Heart right ventricle (tissue), 16 donors: ENCODE measurements at regions of chr4 and their contacts with region 1.

Region 1: DNA sequence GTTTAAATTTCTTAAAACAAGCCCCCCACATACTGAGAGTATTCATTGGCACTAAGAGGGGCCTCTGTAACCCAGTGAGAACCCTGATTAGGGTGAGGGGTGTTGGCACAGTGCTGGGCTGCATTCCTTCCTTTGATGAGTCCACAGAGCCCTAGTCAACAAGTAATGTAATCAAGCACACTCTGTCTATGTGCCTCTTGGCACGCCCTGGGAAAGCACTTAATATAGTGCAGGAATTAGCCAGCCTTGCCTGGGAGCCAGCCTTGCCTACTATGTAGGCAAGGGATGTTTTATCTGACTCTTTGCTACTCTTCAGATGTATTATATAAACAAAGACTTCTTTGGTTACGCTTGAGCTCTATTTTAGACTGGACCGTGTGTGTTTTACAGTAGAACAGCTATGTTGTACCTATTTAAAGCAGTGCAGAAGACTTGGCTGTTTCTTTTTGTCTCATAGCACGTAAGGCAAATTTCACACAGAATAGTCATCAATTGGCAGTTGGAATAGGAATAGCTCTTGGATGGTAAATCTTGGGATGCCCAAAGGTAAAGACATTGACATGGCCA is 64.3 kb downstream of the FRAS1 start:
- DNase-seq: peak; percentile 39 to 48
- ATAC-seq: peak; percentile 82 to 100 (median 99)
- H3K4me3 ChIP-seq: no peak overlapping the region
- H3K27ac ChIP-seq: peak overlapping the region in 4 of 10 donors; percentile 25 to 41 (median 34)
- H3K4me1 ChIP-seq: peaks cover 0 to 12% (median 6%) of the 10 kb centered on the region in 9 donors
- H3K27me3 ChIP-seq: no peaks in the 10 kb centered on the region
- CTCF ChIP-seq: no peak

Region 2: DNA sequence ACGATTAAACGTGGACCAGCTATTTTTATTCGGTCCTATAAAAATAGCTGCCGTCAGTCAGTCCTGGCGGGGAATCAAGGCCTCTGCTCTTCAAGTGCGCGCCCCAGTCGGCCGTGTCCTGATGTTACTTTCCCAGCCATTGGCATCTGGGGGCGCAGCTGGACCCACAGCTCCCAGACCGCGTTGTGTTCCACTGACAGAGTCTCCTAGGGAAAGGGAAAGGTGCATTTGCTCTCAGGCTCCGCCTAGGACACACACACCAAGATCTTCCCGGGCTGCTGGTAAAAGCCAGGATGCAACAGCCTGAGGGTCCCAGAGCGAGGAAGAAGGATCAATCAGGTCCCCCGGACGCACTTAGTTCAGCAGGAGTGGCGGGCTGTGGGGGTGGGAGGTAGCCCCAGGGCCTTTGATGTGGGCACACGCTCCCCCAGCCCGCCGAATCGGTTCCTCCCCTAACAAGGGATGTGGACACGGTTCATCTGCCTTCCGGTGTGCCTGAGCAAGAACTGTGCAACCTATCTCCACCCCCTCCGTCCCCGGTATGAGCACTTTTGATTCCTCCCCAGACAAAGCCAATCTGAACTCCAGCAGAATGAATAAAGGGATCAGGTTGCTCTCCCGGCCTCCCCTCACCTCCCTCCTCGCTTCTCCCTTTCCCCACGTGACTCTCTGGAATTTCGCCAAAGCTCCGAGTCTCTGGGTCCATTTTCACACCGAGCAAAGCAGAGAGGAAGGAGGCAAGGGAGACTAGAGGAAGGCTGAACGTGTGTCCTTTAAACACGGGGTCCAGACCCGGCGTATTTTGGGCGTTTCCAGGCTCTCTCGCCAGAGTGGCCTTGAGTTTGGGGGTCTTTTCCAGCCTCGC is 64.9 kb before region 1 on chr4:
- intact Hi-C with region 1: loop called in 1 of 10 experiments (anchors 5 kb)
- DNase-seq: peak; percentile 53 to 84
- ATAC-seq: peak; percentile 63 to 86 (median 81)
- H3K4me3 ChIP-seq: peak overlapping the region; percentile 54 to 77 (median 70)
- H3K27ac ChIP-seq: peak overlapping the region; percentile 35 to 93 (median 82)
- H3K4me1 ChIP-seq: peaks cover 0 to 37% (median 16%) of the 10 kb centered on the region in 9 donors
- H3K27me3 ChIP-seq: peaks cover 0 to 64% (median 0%) of the 10 kb centered on the region in 7 donors
- CTCF ChIP-seq: peak in 3 of 9 donors; percentile 19 to 22 (median 22)

Region 3: DNA sequence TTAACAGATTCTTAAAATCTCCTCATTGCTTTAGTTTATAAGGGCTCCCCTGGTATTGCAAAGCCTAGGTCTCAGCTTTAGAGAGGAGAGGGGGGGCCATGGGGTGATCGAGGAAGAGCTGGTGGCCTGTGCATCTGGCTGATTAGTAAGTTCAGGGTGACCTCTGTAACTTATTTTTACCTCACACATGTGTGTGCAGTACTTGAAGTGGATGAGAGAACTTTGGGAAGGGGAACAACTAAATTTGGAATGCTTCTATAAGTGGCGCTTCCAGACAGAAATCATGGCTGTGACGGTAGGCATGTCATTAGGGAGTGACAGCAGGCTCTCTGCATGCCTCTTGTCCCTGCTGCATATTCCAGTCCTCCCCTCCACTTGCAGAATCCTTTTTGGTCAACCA is 22.4 kb before region 1 on chr4:
- intact Hi-C with region 1: loop called in 1 of 10 experiments (anchors 1 kb)
- DNase-seq: peak in 1 of 2 donors; percentile 10
- ATAC-seq: peak; percentile 43 to 97 (median 92)
- H3K4me3 ChIP-seq: no peak overlapping the region
- H3K27ac ChIP-seq: peak overlapping the region in 6 of 10 donors; percentile 19 to 50 (median 46)
- H3K4me1 ChIP-seq: peaks cover 0 to 25% (median 12%) of the 10 kb centered on the region in 9 donors
- H3K27me3 ChIP-seq: no peaks in the 10 kb centered on the region
- CTCF ChIP-seq: no peak

Region 4: DNA sequence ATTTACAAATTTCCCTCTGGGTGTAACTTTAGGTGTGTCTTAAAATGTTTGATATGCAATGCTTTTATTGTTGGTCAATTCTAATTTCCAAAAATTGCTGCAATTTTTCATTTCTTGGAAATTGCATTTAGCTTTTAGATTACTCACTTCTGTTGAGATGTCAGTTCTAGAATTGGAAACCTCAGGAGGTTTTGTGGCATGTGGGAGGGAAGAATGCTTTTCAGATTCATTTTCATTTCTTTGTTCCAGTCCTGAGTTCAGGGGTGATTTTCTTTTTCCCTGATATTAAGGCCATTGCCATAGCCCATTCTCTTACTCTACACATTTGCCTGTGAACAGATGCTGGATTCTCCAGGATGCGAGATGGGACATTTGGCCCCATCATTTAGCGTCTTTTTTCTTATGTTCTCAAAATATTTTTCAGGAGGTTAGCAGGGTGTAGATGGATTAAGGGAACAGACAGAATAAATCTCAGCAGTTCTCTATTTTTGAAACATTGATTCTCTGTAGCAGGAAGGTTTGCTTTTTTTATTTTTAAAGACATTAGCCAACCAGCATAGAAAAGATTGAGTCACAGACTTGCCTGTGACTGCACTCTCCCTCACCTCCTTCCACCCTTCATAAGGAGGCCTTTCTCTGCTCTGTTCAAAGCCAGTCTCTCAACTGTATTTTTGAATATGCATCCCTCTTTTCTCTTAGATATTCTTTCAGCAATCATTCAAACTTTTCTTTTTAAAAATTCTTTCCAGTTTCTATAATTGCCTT is 191.8 kb after region 1 on chr4:
- intact Hi-C with region 1: no loop called
- DNase-seq: no peak
- ATAC-seq: no peak
- H3K4me3 ChIP-seq: no peak overlapping the region
- H3K27ac ChIP-seq: peak overlapping the region in 1 of 10 donors; percentile 24
- H3K4me1 ChIP-seq: peaks cover 0 to 8% (median 0%) of the 10 kb centered on the region in 9 donors
- H3K27me3 ChIP-seq: no peaks in the 10 kb centered on the region
- CTCF ChIP-seq: no peak